ENCODE measurements at regions of chr3 and their contacts with region 1.

Region 1: DNA sequence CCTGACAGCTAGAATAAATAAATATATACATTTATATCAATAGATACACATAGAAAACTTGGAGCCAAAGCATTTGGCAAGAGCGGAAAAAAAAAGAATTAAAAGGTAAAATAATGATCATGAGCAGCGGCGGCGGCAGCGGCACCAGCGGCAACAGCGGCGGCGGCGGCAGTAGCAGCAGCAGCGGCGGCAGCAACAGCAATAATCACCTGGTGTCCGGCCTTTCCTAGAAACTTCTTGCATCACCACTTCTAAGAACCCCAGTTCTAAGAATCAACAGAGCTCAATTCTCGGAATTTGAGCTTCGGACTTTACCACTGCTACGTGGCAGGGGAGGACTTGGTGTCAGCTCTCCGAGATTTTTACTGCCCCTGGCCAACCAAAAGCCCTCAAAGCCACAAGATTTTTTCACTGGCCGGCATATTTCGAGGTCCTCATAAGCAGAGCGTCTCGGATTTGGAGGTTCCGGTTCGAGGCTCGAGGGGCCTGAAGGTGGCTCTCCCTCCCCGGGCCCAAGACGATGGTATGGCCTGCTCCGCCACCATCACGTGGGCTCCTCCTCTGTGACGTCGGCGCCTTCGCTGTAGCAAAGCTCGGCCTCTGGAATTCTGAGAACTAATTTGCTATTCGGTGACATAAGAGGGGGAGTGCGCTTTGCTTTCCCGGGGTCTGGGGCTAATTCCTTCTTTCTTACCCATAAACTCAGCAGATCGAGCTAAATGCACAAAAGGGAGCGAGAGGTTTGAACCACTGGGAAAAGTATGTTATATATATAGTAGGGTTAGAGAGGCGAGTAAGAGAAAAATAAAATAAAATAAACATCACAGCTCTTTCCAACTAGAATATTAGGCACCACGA is at the start of gene BCL6:
- DNase-seq: peak; percentile 91 to 98 (median 96)
- H3K4me3 ChIP-seq: peak within 1 kb of the TSS; percentile 73 to 99 (median 82)
- H3K27ac ChIP-seq: peak within 1 kb of the TSS; percentile 98 to 100 (median 99)
- H3K4me1 ChIP-seq: peaks cover 23 to 30% of the 10 kb centered on the region in 2 donors
- H3K27me3 ChIP-seq: no peaks in the 10 kb centered on the region
- CTCF ChIP-seq: peak in 3 of 6 experiments; percentile 5 to 27 (median 8)
- POLR2A ChIP-seq: peak; percentile 98
- total RNA-seq, gene BCL6: 9.5 to 131 (median 93.8) TPM

Region 2: GRCh38 chr3:187616307-187616972 is 129.0 kb before region 1 on chr3:
- intact Hi-C with region 1: no loop called
- DNase-seq: peak; percentile 20 to 64 (median 47)
- H3K4me3 ChIP-seq: no peak overlapping the region
- H3K27ac ChIP-seq: no peak overlapping the region
- H3K4me1 ChIP-seq: no peaks in the 10 kb centered on the region
- H3K27me3 ChIP-seq: no peaks in the 10 kb centered on the region
- CTCF ChIP-seq: peak; percentile 38 to 64 (median 60)
- POLR2A ChIP-seq: no peak

Region 3: DNA sequence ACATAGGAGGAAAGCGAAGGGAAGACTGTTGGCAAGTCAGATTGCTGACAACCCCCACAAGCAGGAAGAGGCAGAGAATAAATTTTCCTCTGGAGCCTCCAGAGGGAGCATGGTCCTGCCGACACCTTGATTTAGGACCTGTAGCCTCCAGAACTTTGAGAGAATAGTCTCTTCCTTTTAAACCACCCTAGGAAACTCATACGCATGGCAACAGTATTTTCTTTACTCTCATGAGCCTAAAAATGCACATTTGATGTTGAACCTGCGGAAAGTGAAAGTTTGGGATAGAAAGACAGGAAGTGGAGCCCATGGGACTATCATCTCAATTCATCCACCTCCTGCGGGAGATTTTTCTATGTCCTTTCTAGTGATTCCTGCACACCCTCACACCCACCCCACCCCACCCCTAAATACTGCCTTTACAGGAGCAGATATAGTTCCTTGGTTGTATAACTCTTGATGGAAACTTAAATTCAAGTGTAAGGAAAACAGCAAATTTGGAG is 291.8 kb after region 1 on chr3:
- intact Hi-C with region 1: loop called in 1 of 2 experiments (anchors 5 kb)
- DNase-seq: peak in 5 of 7 donors; percentile 31 to 50 (median 43)
- H3K4me3 ChIP-seq: peak overlapping the region in 1 of 4 donors; percentile 5
- H3K27ac ChIP-seq: peak overlapping the region in 1 of 5 donors; percentile 47
- H3K4me1 ChIP-seq: peaks cover 17 to 26% of the 10 kb centered on the region in 2 donors
- H3K27me3 ChIP-seq: no peaks in the 10 kb centered on the region
- CTCF ChIP-seq: peak in 5 of 6 experiments; percentile 40 to 55 (median 46)
- POLR2A ChIP-seq: no peak

Region 4: DNA sequence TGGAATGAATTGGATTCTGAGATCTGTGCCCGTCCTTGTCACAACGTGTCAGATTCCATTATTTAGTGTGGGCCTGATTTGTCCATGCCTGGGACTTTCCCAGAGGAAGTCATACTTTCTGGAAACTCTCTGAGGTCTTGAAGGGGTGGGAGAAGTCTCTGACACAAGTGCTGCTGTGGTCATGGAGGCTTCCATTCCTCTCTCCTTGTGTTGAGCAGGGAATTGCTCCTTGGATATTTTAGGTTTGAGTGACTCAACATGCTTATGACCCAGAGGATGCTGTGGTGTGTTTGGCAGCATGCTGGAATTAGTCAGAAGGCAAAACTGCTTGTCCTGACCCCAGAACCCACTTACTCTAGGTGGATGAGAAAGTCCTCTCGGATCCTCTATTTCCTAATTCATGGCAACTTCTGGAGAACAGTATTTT is 540.7 kb after region 1 on chr3:
- intact Hi-C with region 1: loop called in 1 of 2 experiments (anchors 10 kb)
- DNase-seq: peak; percentile 56 to 80 (median 74)
- H3K4me3 ChIP-seq: no peak overlapping the region
- H3K27ac ChIP-seq: peak overlapping the region in 4 of 5 donors; percentile 4 to 75 (median 48)
- H3K4me1 ChIP-seq: peaks cover 34 to 67% of the 10 kb centered on the region in 2 donors
- H3K27me3 ChIP-seq: no peaks in the 10 kb centered on the region
- CTCF ChIP-seq: peak in 1 of 6 experiments; percentile 12
- POLR2A ChIP-seq: peak in 1 of 2 donors; percentile 32